ENCODE measurements at regions of chr17 and their contacts with region 1.

Region 1: DNA sequence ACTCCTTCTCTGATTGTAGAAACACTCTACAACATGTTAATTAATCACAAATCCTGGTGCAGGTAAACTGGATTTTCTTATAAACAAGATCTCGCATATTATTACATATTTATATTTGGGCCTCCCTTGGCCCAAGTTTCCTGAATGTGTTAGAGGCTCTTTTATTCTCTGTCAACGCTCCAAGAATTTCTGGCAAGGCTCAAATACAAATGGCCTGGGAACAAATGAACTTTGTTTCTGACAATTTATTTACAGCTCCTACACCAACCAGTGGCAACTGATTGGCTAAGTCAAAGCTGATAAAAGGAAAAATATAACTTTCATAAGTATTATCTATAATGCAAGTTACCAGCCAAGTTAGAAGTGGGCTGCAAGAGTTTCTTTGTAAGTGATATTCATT is 64.9 kb upstream of the CORO6 start:
- DNase-seq: no peak
- H3K4me3 Mint-ChIP-seq: no peak overlapping the region
- H3K27ac Mint-ChIP-seq: no peak overlapping the region
- H3K4me1 Mint-ChIP-seq: peaks cover 9% of the 10 kb centered on the region
- H3K27me3 Mint-ChIP-seq: no peaks in the 10 kb centered on the region

Region 2: DNA sequence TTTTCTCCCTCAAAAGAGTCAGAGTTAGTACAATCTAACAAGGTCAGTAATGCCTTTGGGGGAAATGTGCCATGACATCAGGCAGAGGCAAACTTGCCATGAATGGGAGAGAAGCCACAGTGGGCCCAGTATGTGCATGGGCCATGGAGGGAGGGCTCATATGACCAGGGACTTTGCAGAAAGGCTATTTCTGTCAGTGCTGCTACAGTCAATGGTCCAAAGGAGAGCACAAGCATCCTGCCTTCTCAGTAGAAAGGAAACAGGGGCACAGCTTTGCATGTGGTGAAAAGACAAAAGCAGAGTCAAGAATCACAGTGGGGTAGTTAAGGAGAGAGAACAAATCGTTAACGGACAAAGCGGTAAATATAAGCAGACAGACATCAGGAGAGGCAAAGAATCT is 53.7 kb before region 1 on chr17:
- CTCF ChIA-PET with region 1: no interaction called
- POLR2A ChIA-PET with region 1: no interaction called
- DNase-seq: no peak
- H3K4me3 Mint-ChIP-seq: no peak overlapping the region
- H3K27ac Mint-ChIP-seq: peak overlapping the region; percentile 7
- H3K4me1 Mint-ChIP-seq: peaks cover 21% of the 10 kb centered on the region
- H3K27me3 Mint-ChIP-seq: no peaks in the 10 kb centered on the region

Region 3: DNA sequence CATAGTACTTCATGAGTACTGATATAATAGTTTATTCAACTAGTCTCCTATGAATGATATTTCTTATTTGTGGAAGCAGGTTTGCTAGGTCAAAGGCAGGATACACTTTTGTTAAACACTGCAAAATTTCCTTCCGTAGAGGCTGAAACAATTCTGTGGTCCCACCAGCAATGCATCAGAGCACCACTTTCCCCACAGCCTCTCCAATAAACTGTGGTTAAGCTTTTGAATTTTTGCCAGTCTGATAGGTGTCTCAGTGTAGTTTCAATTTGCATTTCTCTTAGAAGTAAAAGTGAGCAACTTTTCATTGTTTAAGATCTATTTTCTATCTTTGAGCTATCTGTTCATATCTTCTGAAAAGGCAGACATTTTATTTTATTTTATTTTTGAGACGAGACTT is 28.4 kb before region 1 on chr17:
- CTCF ChIA-PET with region 1: no interaction called
- POLR2A ChIA-PET with region 1: no interaction called
- DNase-seq: no peak
- H3K4me3 Mint-ChIP-seq: no peak overlapping the region
- H3K27ac Mint-ChIP-seq: peak overlapping the region; percentile 68
- H3K4me1 Mint-ChIP-seq: peaks cover 13% of the 10 kb centered on the region
- H3K27me3 Mint-ChIP-seq: no peaks in the 10 kb centered on the region

Region 4: DNA sequence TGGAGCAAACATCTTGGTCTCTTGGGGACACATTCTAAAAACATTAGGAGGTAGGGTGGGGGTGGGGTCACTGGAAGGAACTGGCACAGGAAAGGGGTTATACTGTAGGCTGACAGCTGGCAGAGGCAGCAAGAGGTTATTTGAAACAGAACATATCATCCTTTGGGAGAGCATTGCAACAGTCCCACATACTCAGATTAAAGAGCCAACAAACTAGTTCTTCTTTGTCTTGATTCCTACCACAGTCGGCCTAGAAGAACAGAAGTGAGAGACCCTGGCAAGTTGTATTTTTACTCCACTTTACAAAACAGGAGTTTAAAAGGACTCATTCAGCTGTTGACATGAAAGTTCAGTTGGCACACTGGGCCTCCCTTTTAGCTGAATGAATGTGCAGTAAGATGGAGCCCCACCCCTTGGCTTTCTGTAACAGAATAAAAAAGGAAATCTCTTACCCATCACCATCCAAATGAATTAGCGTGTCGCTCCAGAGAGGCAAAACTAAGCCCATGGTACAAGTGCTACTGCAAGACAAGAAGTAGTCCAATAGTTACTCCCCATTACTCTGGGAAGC is 10.3 kb before region 1 on chr17:
- CTCF ChIA-PET with region 1: interaction called, 12 read pairs
- POLR2A ChIA-PET with region 1: no interaction called
- DNase-seq: no peak
- H3K4me3 Mint-ChIP-seq: no peak overlapping the region
- H3K27ac Mint-ChIP-seq: peak overlapping the region; percentile 37
- H3K4me1 Mint-ChIP-seq: peaks cover 34% of the 10 kb centered on the region
- H3K27me3 Mint-ChIP-seq: no peaks in the 10 kb centered on the region

Measured in activated CD4-positive, alpha-beta T cell treated with anti-CD3 and anti-CD28 coated beads, Interleukin-2, amount 10 ng/mL, durations not matched to agents 7 days and 5 days (primary cell).